Activated B cell treated with CpG ODN at 0.5 μM for 24 hours (primary cell): ENCODE measurements at regions of chr13 and their contacts with region 1.

Region 1: GRCh38 chr13:75760131-75761021 is 124.2 kb downstream of the LMO7 start:
- DNase-seq: no peak
- ATAC-seq: peak; percentile 69
- H3K4me3 Mint-ChIP-seq: peak overlapping the region; percentile 64
- H3K27ac Mint-ChIP-seq: peak overlapping the region; percentile 9
- H3K4me1 Mint-ChIP-seq: peaks cover 27% of the 10 kb centered on the region
- H3K27me3 Mint-ChIP-seq: no peaks in the 10 kb centered on the region
- CTCF ChIP-seq: no peak

Region 2: GRCh38 chr13:75696746-75697145 is 63.6 kb before region 1 on chr13:
- CTCF ChIA-PET with region 1: interaction called, 10 read pairs
- POLR2A ChIA-PET with region 1: no interaction called
- intact Hi-C with region 1: no loop called
- DNase-seq: no peak
- ATAC-seq: no peak
- H3K4me3 Mint-ChIP-seq: no peak overlapping the region
- H3K27ac Mint-ChIP-seq: no peak overlapping the region
- H3K4me1 Mint-ChIP-seq: no peaks in the 10 kb centered on the region
- H3K27me3 Mint-ChIP-seq: no peaks in the 10 kb centered on the region
- CTCF ChIP-seq: no peak